AG04450 (cell line): ENCODE measurements at regions of chr10 and their contacts with region 1.

Region 1: GRCh38 chr10:104274762-104275721 is 6.1 kb downstream of the GSTO2 start:
- DNase-seq: no peak
- H3K4me3 ChIP-seq: peak overlapping the region; percentile 32
- H3K27ac ChIP-seq: no peak overlapping the region
- H3K27me3 ChIP-seq: peaks cover 2% of the 10 kb centered on the region
- CTCF ChIP-seq: peak; percentile 84

Region 2: DNA sequence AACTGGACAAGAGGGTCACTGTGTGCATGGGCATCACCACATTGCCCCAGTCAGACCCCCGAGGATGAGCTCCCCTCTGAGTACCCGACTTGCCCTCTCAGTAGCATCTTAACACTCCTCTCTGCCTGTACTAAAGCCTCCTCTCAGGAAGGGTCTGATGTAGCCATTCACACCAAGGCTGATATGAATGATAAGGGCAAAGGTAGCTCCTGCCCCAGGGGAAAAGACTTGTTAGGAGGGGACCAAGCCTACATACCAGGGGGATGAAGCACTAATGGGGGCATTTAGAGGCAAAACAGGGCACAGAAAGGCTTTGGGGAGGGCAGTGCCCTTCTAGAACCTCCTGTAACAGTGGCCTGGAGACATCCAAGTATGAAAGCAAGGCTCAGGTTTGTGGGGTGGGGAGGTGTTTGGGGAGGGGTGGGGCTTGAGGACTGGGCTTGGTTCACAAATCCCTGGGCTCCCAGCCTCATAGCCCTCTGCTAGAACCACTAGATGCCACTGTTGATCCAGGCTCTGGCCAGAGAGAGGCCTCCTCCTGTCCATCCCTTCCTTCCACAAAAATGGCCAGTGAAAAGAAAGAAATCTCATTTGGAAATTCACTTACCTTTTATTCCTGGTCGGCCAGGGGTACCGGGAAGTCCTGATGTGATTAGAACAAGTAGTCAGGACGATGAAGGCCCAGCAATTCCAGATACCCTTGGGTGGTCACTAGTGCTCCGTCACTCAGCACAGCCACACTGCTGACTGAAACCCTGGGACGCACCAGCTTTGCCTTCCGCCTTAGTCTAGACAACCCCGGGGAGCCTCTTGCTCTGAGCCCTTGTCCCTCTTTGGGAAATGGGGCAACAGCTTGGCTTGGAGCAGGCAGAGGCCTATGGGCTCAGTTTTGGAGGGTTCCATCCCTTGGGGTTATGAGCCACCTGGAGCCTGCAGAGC is 229.6 kb before region 1 on chr10:
- CTCF ChIA-PET with region 1: interaction called, 13 read pairs
- POLR2A ChIA-PET with region 1: no interaction called
- DNase-seq: peak; percentile 52
- H3K4me3 ChIP-seq: no peak overlapping the region
- H3K27ac ChIP-seq: no peak overlapping the region
- H3K27me3 ChIP-seq: peaks cover 2% of the 10 kb centered on the region
- CTCF ChIP-seq: peak; percentile 83

Region 3: DNA sequence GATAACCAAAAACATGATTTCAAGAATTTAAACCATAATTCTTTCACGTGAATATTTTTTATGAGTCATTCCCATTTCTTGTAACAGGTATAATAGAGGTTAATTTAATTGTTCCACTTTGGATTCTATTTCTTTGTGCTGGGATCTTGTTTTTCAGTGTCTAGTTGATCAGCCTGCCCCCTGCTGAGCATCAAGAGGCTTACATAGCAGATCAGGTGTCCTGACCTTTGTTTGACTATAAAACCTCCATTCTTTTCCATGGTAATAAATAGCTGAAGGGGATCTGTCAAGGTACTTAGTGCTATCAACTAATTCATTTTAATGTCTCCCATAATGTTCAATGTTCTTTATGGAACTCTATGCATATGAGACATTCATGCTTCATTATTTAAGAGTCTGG is 194.3 kb before region 1 on chr10:
- CTCF ChIA-PET with region 1: no interaction called
- POLR2A ChIA-PET with region 1: no interaction called
- DNase-seq: no peak
- H3K4me3 ChIP-seq: no peak overlapping the region
- H3K27ac ChIP-seq: no peak overlapping the region
- H3K27me3 ChIP-seq: peaks cover 29% of the 10 kb centered on the region
- CTCF ChIP-seq: peak; percentile 42

Region 4: DNA sequence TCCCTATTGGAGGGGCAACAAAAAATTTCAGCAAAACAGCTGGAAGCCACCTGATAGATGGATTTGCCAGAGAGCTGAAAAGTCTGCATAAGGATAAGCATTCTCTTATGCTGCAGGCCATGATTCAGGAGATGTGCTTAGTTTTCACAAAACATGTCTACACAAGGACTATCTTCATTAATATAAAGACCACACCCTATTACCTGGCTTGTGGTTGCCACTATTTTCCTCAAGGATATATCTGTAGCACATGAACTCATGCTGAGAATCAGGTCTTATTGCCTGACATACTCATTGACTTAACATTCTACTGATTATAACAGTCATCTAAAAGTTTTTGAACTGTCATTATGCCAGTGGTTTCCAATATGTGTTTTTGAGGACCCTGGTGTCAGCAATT is 182.3 kb before region 1 on chr10:
- CTCF ChIA-PET with region 1: no interaction called
- POLR2A ChIA-PET with region 1: no interaction called
- DNase-seq: no peak
- H3K4me3 ChIP-seq: no peak overlapping the region
- H3K27ac ChIP-seq: no peak overlapping the region
- H3K27me3 ChIP-seq: no peaks in the 10 kb centered on the region
- CTCF ChIP-seq: no peak

Region 5: DNA sequence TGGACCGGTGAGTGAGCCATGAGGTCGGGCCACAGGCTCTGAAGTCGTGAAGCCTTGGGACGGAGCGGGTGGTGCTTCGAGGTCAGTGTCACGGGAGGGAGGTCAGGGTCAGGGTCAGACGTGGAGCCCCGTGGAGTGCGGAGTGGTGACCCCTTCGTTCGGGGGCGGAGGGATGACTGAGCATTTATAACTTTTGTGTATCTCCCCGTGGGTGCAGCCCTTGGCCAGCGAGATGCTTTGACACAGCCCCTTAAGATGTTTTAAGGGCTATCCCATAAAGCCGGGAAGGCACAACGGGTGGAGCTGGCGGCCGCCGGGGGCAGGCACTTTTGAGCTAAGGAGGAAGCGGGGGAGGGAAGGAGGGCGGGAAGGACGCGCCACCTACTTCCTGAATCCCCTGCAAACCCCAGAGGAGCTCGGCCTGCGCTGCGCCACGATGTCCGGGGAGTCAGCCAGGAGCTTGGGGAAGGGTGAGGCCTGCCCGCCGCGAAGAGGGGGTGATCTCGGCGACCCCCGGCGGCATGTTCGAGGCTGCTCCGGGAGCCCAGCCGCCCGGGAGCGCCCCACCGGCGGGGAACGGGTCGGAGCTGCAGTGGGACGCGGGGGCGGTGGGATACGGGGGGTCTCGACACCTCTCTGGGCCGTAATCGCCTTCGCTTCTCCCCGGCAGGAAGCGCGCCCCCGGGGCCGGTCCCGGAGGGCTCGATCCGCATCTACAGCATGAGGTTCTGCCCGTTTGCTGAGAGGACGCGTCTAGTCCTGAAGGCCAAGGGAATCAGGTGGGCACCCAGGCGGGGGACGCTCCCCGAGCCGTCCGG is 20.3 kb before region 1 on chr10 and contains the start of gene GSTO1:
- CTCF ChIA-PET with region 1: interaction called, 47 read pairs
- POLR2A ChIA-PET with region 1: interaction called, 13 read pairs
- DNase-seq: peak; percentile 46
- H3K4me3 ChIP-seq: peak within 1 kb of the TSS; percentile 85
- H3K27ac ChIP-seq: peak within 1 kb of the TSS; percentile 95
- H3K27me3 ChIP-seq: no peaks in the 10 kb centered on the region
- CTCF ChIP-seq: 0 out of 2 replicates have a peak, but pooled peaks have one; percentile 2
- polyA plus RNA-seq, gene GSTO1: 185 and 227 TPM in 2 replicates

Region 6: GRCh38 chr10:104308439-104308903 is 33.4 kb after region 1 on chr10:
- CTCF ChIA-PET with region 1: interaction called, 16 read pairs
- POLR2A ChIA-PET with region 1: no interaction called
- DNase-seq: no peak
- H3K4me3 ChIP-seq: no peak overlapping the region
- H3K27ac ChIP-seq: no peak overlapping the region
- H3K27me3 ChIP-seq: no peaks in the 10 kb centered on the region
- CTCF ChIP-seq: no peak

Region 7: DNA sequence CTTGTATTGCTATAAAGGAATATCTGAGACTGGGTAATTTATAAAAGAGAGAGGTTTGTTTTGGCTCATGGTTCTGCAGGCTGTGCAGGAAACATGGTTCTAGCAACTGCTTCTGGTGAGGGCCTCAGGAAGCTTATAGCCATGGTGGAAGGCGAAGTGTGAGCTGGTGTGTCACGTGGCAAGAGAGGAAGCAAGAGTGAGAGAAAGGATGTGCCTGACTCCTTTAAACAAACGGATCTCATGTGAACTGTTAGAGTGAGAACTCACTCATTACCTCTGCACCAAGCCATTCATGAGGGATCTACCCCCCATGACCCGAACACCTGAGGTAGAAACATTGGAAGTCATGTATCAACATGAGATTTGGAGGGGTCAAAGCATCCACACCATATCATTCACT is 70.9 kb after region 1 on chr10:
- CTCF ChIA-PET with region 1: interaction called, 143 read pairs
- POLR2A ChIA-PET with region 1: no interaction called
- DNase-seq: no peak
- H3K4me3 ChIP-seq: no peak overlapping the region
- H3K27ac ChIP-seq: no peak overlapping the region
- H3K27me3 ChIP-seq: no peaks in the 10 kb centered on the region
- CTCF ChIP-seq: no peak